Heart left ventricle (tissue), 16 donors: ENCODE measurements at regions of chr5 and their contacts with region 1.

Region 1: GRCh38 chr5:73902327-73903051 is 276.5 kb downstream of the ARHGEF28 start:
- DNase-seq: peak in 1 of 5 donors; percentile 14
- ATAC-seq: peak in 1 of 4 donors; percentile 29
- H3K4me3 ChIP-seq: peak overlapping the region in 2 of 12 donors; percentile 9 to 15
- H3K27ac ChIP-seq: peak overlapping the region in 3 of 12 donors; percentile 32 to 59 (median 49)
- H3K4me1 ChIP-seq: peaks cover 0 to 26% (median 5%) of the 10 kb centered on the region in 12 donors
- H3K27me3 ChIP-seq: no peaks in the 10 kb centered on the region
- CTCF ChIP-seq: peak; percentile 81 to 91 (median 86)
- POLR2A ChIP-seq: no peak

Region 2: DNA sequence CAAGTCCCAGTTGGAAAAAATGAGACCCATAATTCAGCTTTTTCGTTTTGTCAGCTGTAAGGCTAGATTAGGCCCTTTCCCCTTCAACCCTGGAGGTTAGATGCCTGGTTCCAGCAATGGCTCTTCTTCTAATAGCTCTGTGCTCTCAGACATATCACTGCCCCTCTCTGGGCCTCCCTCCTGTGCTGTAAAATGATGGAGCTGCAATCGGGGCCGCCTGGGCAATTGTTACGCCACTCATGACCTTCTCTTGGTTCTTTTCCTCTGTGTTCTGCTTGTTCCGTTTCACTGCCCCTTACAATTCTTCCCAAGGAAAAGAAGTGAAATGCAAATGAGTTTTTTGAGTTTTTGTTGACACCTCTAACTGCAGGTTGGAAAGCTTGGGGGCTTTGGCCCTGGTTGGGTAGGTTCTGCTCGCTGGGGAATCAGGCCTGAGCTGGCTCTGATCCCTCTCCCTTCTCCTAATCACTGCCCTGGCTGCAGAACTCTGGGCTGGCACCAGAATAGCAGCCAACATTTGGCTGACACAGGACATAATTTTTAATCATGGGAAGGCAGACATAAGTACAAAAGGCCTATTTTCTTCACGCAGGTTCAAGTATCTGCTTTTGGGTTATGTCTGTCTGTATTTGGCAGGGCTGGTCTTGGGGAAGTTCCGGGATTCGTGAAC is 564.8 kb before region 1 on chr5:
- intact Hi-C with region 1: no loop called
- DNase-seq: no peak
- ATAC-seq: no peak
- H3K4me3 ChIP-seq: no peak overlapping the region
- H3K27ac ChIP-seq: no peak overlapping the region
- H3K4me1 ChIP-seq: peaks cover 0 to 4% (median 0%) of the 10 kb centered on the region in 12 donors
- H3K27me3 ChIP-seq: peaks cover 0 to 73% (median 19%) of the 10 kb centered on the region in 9 donors
- CTCF ChIP-seq: no peak
- POLR2A ChIP-seq: no peak

Region 3: GRCh38 chr5:73471654-73472053 is 430.8 kb before region 1 on chr5:
- intact Hi-C with region 1: no loop called
- DNase-seq: no peak
- ATAC-seq: peak in 1 of 4 donors; percentile 31
- H3K4me3 ChIP-seq: no peak overlapping the region
- H3K27ac ChIP-seq: no peak overlapping the region
- H3K4me1 ChIP-seq: no peaks in the 10 kb centered on the region
- H3K27me3 ChIP-seq: peaks cover 0 to 9% (median 0%) of the 10 kb centered on the region in 9 donors
- CTCF ChIP-seq: no peak
- POLR2A ChIP-seq: no peak

Region 4: DNA sequence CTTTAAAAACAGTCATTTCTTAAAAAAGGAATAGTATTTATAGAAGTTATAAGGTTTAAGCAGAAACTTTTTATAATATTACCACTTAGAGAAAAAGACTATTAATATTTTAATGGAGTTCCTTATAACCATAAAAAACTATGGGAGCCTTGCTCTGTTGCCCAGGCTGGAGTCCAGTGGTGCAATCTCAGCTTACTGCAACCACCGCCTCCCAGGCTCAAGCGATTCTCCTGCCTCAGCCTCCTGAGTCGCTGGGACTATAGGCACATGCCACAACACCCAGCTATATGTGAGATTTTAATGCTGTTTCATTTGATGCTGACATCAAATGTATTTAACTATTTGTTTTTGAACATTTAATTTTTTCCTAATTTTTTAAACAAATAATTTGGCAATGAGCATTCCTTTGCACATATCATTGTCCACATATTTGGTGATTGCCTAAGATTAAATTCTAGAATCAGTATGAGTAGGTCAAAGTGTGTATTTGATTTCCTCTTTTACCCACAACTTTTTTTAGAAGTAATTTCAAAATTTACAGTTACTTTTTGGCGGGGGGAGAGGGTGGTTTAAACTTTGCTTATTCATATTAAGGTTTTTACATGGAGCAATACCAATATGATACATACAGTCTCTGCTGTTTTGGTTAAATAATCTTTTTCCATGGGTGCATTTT is 41.0 kb before region 1 on chr5:
- intact Hi-C with region 1: loop called in 1 of 10 experiments (anchors 5 kb)
- DNase-seq: no peak
- ATAC-seq: no peak
- H3K4me3 ChIP-seq: no peak overlapping the region
- H3K27ac ChIP-seq: peak overlapping the region in 3 of 12 donors; percentile 15 to 54 (median 41)
- H3K4me1 ChIP-seq: peaks cover 0 to 38% (median 15%) of the 10 kb centered on the region in 12 donors
- H3K27me3 ChIP-seq: no peaks in the 10 kb centered on the region
- CTCF ChIP-seq: no peak
- POLR2A ChIP-seq: no peak

Region 5: GRCh38 chr5:74035521-74035981 is 133.1 kb after region 1 on chr5:
- intact Hi-C with region 1: loop called in 5 of 10 experiments (anchors 10 kb)
- DNase-seq: peak in 3 of 5 donors; percentile 32 to 50 (median 38)
- ATAC-seq: peak; percentile 46 to 84 (median 69)
- H3K4me3 ChIP-seq: no peak overlapping the region
- H3K27ac ChIP-seq: no peak overlapping the region
- H3K4me1 ChIP-seq: peaks cover 0 to 14% (median 1%) of the 10 kb centered on the region in 12 donors
- H3K27me3 ChIP-seq: no peaks in the 10 kb centered on the region
- CTCF ChIP-seq: peak; percentile 16 to 69 (median 52)
- POLR2A ChIP-seq: no peak

Region 6: GRCh38 chr5:74382987-74383593 is 480.6 kb after region 1 on chr5:
- intact Hi-C with region 1: loop called in 1 of 10 experiments (anchors 10 kb)
- DNase-seq: peak in 4 of 5 donors; percentile 73 to 78 (median 76)
- ATAC-seq: peak; percentile 72 to 93 (median 86)
- H3K4me3 ChIP-seq: peak overlapping the region in 1 of 12 donors; percentile 8
- H3K27ac ChIP-seq: peak overlapping the region; percentile 31 to 90 (median 70)
- H3K4me1 ChIP-seq: peaks cover 7 to 58% (median 33%) of the 10 kb centered on the region in 12 donors
- H3K27me3 ChIP-seq: no peaks in the 10 kb centered on the region
- CTCF ChIP-seq: no peak
- POLR2A ChIP-seq: no peak

Region 7: GRCh38 chr5:74648835-74649293 is 746.4 kb after region 1 on chr5:
- intact Hi-C with region 1: loop called in 9 of 10 experiments (anchors 1 to 2 kb)
- DNase-seq: peak in 1 of 5 donors; percentile 35
- ATAC-seq: peak; percentile 67 to 95 (median 88)
- H3K4me3 ChIP-seq: peak overlapping the region in 2 of 12 donors; percentile 10 to 12
- H3K27ac ChIP-seq: no peak overlapping the region
- H3K4me1 ChIP-seq: peaks cover 0 to 16% (median 5%) of the 10 kb centered on the region in 12 donors
- H3K27me3 ChIP-seq: no peaks in the 10 kb centered on the region
- CTCF ChIP-seq: peak; percentile 58 to 84 (median 78)
- POLR2A ChIP-seq: no peak

Region 8: DNA sequence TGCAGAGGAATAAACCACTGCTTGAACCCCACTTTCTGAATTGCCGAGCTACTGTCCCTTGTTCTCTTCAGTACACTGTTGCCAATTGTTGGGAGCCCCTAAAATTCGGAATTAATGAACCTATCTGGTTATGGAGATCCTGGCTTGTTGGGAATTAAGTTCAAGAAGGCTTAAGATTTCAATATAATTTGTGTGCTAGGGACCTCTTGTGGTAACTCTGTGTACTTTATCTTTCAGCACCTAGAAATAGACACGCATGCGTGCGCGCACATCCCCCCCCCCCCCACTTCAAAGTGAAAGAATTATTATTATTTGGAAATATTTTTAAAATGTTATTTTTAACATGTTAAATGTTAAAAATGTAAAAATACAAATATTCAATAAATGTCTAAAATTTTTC is 1017.0 kb after region 1 on chr5:
- intact Hi-C with region 1: loop called in 4 of 10 experiments (anchors 10 kb)
- DNase-seq: no peak
- ATAC-seq: peak in 1 of 4 donors; percentile 55
- H3K4me3 ChIP-seq: no peak overlapping the region
- H3K27ac ChIP-seq: no peak overlapping the region
- H3K4me1 ChIP-seq: no peaks in the 10 kb centered on the region
- H3K27me3 ChIP-seq: peaks cover 0 to 3% (median 0%) of the 10 kb centered on the region in 9 donors
- CTCF ChIP-seq: peak; percentile 23 to 60 (median 48)
- POLR2A ChIP-seq: no peak